HepG2 (cell line): ENCODE measurements at regions of chr4 and their contacts with region 1.

Region 1: DNA sequence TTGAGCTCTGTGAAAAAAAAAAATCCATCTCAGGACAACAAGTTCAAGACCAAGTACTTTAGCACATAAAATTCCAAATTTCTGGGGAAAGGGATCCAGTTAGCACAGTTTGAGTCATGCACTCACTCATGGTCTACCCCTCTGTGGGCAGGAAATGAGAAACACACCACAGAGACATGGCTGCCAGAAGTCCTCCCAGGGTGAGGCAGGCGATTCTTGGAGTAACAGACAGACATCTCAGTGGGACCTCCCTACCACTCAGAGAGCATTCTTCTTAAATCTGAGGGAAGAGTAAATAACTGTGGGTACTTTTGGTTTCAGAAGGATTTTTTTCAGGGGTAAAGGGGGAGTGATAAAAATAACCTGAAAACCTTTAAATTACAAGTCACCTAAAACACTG is 14.1 kb downstream of the CXCL1 start:
- DNase-seq: no peak
- ATAC-seq: no peak
- H3K4me3 ChIP-seq: no peak overlapping the region
- H3K27ac ChIP-seq: no peak overlapping the region
- H3K4me1 ChIP-seq: no peaks in the 10 kb centered on the region
- H3K27me3 ChIP-seq: no peaks in the 10 kb centered on the region
- CTCF ChIP-seq: no peak
- EP300 ChIP-seq: no peak
- POLR2A ChIP-seq: no peak
- RAD21 ChIP-seq: no peak

Region 2: DNA sequence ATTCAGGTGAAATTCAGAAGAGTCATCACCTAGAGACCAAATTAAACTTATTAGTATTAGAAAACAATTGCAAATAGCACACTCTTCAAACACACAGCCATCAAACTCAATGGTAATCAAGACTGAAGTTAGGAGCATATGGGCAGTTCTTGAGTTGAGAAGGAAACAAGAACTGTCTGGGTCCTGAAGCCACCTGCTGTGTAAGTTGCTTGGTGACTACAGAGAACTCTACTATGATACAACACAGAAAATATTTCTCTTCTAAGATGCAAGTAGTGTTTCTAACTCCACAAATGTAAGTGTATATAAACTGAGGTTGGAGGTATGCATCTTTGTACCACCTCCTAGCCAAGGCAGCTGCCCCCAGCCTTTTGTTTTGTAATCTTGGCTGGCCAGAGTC is 30.5 kb before region 1 on chr4:
- CTCF ChIA-PET with region 1: no interaction called
- POLR2A ChIA-PET with region 1: no interaction called
- in situ Hi-C with region 1: no loop called
- intact Hi-C with region 1: loop called (anchors 1 kb)
- DNase-seq: no peak
- ATAC-seq: no peak
- H3K4me3 ChIP-seq: no peak overlapping the region
- H3K27ac ChIP-seq: no peak overlapping the region
- H3K4me1 ChIP-seq: no peaks in the 10 kb centered on the region
- H3K27me3 ChIP-seq: 0 out of 5 replicates have a peak, but pooled peaks cover 0 to 3% of the 10 kb centered on the region in 2 experiments
- CTCF ChIP-seq: no peak
- EP300 ChIP-seq: no peak
- POLR2A ChIP-seq: no peak
- RAD21 ChIP-seq: no peak